Endothelial cell of umbilical vein (primary cell): ENCODE measurements at regions of chr6 and their contacts with region 1.

Region 1: DNA sequence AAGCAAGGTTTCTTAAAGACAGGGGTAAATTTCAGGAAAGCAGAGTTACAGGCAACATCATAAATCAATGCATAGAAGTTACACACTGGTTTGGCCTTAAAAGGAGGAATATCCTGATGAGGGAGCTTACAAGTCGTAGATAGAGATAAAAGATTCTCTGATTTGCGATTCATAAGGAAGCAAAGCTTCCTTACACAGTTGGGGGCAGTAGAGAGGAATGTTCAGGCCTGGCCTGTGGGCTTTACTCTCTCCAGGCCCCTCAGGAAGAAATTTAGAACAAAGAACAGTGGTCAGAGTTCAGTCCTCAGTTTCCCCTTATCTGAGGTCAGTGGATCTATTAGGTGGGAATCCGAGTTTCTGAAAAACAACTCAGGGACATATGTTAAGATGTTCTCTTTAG is 19.3 kb downstream of the HLA-C start:
- DNase-seq: no peak
- H3K4me3 ChIP-seq: no peak overlapping the region
- H3K27ac ChIP-seq: no peak overlapping the region
- H3K4me1 ChIP-seq: no peaks in the 10 kb centered on the region
- H3K27me3 ChIP-seq: peaks cover 14 to 28% of the 10 kb centered on the region in 2 experiments
- CTCF ChIP-seq: no peak
- POLR2A ChIP-seq: no peak

Region 2: DNA sequence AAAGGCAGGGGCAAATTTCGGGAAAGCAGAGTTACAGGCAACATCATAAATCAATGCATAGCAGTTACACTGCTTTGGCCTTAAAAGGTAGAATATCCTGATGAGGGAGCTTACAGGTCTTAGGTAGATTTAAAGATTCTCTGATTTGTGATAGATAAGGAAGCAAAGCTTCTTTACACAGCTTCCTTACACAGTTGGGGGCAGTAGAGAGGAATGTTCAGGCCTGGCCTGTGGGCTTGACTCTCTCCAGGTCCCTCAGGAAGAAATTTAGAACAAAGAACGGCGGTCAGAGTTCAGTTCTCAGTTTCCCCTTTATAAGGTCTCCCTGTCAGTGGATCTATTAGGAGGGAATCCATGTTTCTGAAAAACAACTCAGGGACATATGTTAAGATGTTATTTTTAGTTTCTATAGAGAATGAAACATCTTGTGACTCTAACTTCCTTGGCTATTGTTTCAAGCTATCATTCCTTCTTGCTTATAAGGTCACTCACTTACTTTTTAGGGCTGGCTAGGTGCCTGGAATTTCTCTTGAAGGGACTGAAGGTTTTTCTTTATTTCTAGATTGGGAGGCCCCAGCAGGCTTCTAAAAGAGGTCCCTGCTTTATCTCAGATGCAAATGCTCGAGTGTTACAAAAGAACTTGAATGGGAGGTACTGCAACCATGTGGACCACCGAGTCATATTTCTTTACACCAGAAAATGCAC is 92.6 kb after region 1 on chr6:
- CTCF ChIA-PET with region 1: no interaction called
- POLR2A ChIA-PET with region 1: no interaction called
- dilution Hi-C with region 1: no loop called
- intact Hi-C with region 1: loop called (anchors 1 kb)
- DNase-seq: no peak
- H3K4me3 ChIP-seq: no peak overlapping the region
- H3K27ac ChIP-seq: no peak overlapping the region
- H3K4me1 ChIP-seq: no peaks in the 10 kb centered on the region
- H3K27me3 ChIP-seq: peaks cover 15 to 28% of the 10 kb centered on the region in 2 experiments
- CTCF ChIP-seq: no peak
- POLR2A ChIP-seq: no peak

Region 3: GRCh38 chr6:31493875-31494694 is 241.5 kb after region 1 on chr6:
- CTCF ChIA-PET with region 1: no interaction called
- POLR2A ChIA-PET with region 1: no interaction called
- dilution Hi-C with region 1: no loop called
- intact Hi-C with region 1: no loop called
- DNase-seq: peak; percentile 86
- H3K4me3 ChIP-seq: peak overlapping the region; percentile 44 to 84 (median 58)
- H3K27ac ChIP-seq: peak overlapping the region; percentile 74
- H3K4me1 ChIP-seq: peaks cover 20% of the 10 kb centered on the region
- H3K27me3 ChIP-seq: no peaks in the 10 kb centered on the region
- CTCF ChIP-seq: peak; percentile 84 to 95
- POLR2A ChIP-seq: no peak